ENCODE measurements at regions of chr3 and their contacts with region 1.

Region 1: DNA sequence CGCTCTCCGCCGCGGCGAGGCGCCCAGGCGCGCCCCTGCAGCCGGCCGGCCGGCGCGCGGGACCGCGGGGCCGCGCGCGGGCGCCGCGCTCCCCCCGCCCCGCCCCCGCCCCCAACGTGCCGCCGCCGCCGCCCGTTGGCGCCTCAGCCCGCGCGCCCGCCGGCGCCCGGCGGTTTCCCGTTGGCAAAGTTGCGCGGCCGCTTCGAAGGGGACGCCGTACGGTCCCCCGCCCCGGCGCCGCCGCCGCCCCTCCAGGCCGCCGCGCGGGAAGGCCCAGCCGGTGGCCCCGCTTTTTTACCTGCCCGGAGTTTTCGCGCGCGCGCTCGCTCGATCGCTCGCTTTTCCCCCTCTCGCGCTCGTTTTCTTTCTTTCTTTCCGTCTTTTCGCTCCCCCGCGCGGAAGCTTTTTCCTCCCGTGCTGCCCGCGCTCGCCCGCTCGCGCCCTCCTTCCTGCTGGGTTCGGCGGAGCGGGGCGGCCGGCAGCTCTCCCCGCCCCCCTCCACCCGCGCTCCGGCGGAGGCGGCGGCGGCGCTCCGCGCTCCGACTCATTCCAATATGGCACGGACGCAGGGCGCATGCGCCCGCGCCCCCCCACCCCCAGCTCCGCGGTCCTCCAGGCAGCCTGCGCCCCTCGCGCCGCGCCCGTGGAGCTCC is at the start of gene SFMBT1:
- DNase-seq: peak in 9 of 10 donors; percentile 41 to 89 (median 75)
- ATAC-seq: peak; percentile 55 to 58
- H3K4me3 Mint-ChIP-seq: peak within 1 kb of the TSS; percentile 85 to 99 (median 98)
- H3K27ac Mint-ChIP-seq: peak within 1 kb of the TSS; percentile 97 to 99 (median 98)
- H3K4me1 Mint-ChIP-seq: peaks cover 20 to 43% (median 36%) of the 10 kb centered on the region in 4 donors
- H3K27me3 Mint-ChIP-seq: no peaks in the 10 kb centered on the region
- polyA plus RNA-seq, gene SFMBT1: 13.4 to 29.7 (median 18.1) TPM

Region 2: DNA sequence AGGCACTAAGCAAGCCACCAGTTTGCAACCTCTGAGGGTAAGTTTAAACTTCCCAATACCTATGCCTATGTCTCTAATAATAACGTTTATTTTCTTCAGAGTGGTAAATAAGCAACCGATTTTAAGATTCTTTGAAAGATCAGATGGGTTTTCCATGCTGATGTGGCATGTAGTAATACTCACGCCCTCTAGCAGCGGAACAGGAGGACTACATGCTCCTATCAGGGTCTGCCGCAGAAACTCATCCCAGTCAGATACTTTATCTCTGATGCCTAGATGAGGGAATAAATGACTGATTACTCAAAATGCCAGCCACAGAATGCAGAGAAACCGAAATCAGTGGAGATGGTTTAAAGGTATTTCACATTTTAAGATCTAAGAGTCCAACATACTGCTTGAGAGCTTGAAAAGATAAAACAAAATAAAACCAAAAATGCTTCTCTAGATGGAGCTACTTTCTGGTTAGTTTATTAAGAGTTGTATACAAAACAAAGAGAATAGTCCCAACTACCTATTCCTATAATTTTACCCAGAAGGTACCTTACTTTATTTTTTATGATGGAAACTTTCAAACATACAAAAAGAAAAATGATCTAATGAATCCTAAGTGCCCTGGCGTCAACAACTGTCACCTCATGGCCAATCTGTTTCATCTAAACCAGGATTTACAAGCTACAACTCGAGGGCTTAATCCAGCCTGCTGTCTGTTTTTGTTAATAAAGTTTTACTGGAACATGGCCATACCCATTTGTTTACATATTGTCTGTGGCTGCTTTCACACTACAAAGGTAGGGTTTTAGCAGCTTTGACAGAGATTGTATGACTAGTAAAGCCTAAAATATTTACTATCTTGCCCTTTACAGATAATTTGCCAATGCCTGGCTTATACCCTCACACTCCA is 110.8 kb before region 1 on chr3:
- POLR2A ChIA-PET with region 1: interaction called, 10 read pairs
- DNase-seq: peak in 9 of 10 donors; percentile 21 to 74 (median 41)
- ATAC-seq: peak; percentile 99
- H3K4me3 Mint-ChIP-seq: peak overlapping the region in 3 of 10 donors; percentile 7 to 44 (median 27)
- H3K27ac Mint-ChIP-seq: peak overlapping the region; percentile 8 to 68 (median 41)
- H3K4me1 Mint-ChIP-seq: peaks cover 4 to 19% (median 10%) of the 10 kb centered on the region in 4 donors
- H3K27me3 Mint-ChIP-seq: no peaks in the 10 kb centered on the region

Region 3: GRCh38 chr3:52983336-52983807 is 62.3 kb before region 1 on chr3:
- POLR2A ChIA-PET with region 1: interaction called, 42 read pairs
- DNase-seq: peak; percentile 24 to 93 (median 74)
- ATAC-seq: peak; percentile 91 to 92
- H3K4me3 Mint-ChIP-seq: peak overlapping the region; percentile 68 to 83 (median 76)
- H3K27ac Mint-ChIP-seq: peak overlapping the region; percentile 87 to 95 (median 93)
- H3K4me1 Mint-ChIP-seq: peaks cover 21 to 54% (median 43%) of the 10 kb centered on the region in 4 donors
- H3K27me3 Mint-ChIP-seq: no peaks in the 10 kb centered on the region

Region 4: GRCh38 chr3:53030619-53031449 is 14.8 kb before region 1 on chr3:
- POLR2A ChIA-PET with region 1: interaction called, 73 read pairs
- DNase-seq: peak in 9 of 10 donors; percentile 10 to 66 (median 30)
- ATAC-seq: peak; percentile 84 to 92
- H3K4me3 Mint-ChIP-seq: peak overlapping the region; percentile 37 to 85 (median 67)
- H3K27ac Mint-ChIP-seq: peak overlapping the region; percentile 79 to 96 (median 91)
- H3K4me1 Mint-ChIP-seq: peaks cover 16 to 61% (median 48%) of the 10 kb centered on the region in 4 donors
- H3K27me3 Mint-ChIP-seq: no peaks in the 10 kb centered on the region

Region 5: GRCh38 chr3:53072653-53073552 is 27.3 kb after region 1 on chr3:
- POLR2A ChIA-PET with region 1: interaction called, 15 read pairs
- DNase-seq: peak; percentile 78 to 93 (median 87)
- ATAC-seq: peak; percentile 87 to 95
- H3K4me3 Mint-ChIP-seq: peak overlapping the region; percentile 85 to 96 (median 93)
- H3K27ac Mint-ChIP-seq: peak overlapping the region; percentile 87 to 97 (median 96)
- H3K4me1 Mint-ChIP-seq: peaks cover 14 to 21% (median 19%) of the 10 kb centered on the region in 4 donors
- H3K27me3 Mint-ChIP-seq: no peaks in the 10 kb centered on the region

Measured in naive thymus-derived CD8-positive, alpha-beta T cell (primary cell).